T-cell (primary cell): ENCODE measurements at regions of chr6 and their contacts with region 1.

Region 1: DNA sequence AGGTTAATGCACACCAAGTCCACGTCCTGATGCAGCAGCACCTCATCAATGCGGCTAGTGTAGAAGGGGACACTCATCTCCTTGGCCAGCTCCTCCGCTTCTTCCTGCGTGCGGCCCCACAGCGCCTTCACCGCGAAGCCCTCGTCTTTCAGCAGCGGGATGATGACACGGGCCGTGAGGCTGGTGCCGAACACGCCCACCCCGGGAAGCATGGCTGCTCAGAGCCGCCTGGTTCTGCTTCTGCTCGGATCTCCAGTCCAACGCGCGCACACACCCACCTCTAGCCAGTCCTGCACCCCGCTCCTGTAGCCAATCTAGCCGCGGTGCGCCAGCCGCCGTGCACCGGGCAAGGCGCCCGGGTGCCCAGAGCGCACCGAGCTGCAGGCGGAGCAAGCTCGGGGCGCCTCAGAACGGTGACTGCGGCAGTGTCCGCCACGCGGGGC is 700 bp downstream of the GFOD1 start:
- DNase-seq: peak in 32 of 35 experiments; percentile 21 to 68 (median 39)
- ATAC-seq: peak; percentile 42 to 54 (median 48)
- H3K4me3 ChIP-seq: peak overlapping the region; percentile 61 to 81
- H3K4me3 Mint-ChIP-seq: peak overlapping the region; percentile 85 to 94 (median 88)
- H3K27ac ChIP-seq: no peak overlapping the region
- H3K27ac Mint-ChIP-seq: peak overlapping the region in 1 of 2 donors; percentile 73
- H3K4me1 ChIP-seq: peaks cover 12 to 37% of the 10 kb centered on the region in 2 experiments
- H3K4me1 Mint-ChIP-seq: peaks cover 27 to 39% (median 32%) of the 10 kb centered on the region in 3 donors
- H3K27me3 ChIP-seq: peaks cover 0 to 19% of the 10 kb centered on the region in 2 experiments
- H3K27me3 Mint-ChIP-seq: peaks cover 10 to 17% of the 10 kb centered on the region in 2 donors

Region 2: DNA sequence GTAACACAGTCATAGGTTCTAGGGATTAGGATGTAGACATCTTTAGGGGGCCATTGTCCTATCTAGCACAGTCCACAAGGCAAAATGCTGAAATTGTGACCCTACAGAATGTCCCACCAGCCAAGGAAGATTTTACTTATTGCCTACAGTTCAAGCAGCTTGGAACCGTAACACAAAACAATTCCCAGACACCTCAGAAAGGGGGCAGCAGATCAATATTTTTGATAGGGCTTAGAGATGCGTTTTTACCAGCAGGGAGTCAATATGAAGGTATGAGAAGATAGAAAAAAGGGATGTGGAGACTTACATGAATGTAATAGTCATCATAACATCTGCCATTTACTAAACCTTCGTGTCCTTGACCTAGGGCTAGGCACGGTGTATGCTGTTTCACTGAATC is 1868.2 kb before region 1 on chr6:
- CTCF ChIA-PET with region 1: no interaction called
- POLR2A ChIA-PET with region 1: no interaction called
- DNase-seq: peak in 1 of 35 experiments; percentile 5
- ATAC-seq: no peak
- H3K4me3 ChIP-seq: no peak overlapping the region
- H3K4me3 Mint-ChIP-seq: no peak overlapping the region
- H3K27ac ChIP-seq: no peak overlapping the region
- H3K27ac Mint-ChIP-seq: no peak overlapping the region
- H3K4me1 ChIP-seq: no peaks in the 10 kb centered on the region
- H3K4me1 Mint-ChIP-seq: no peaks in the 10 kb centered on the region
- H3K27me3 ChIP-seq: no peaks in the 10 kb centered on the region
- H3K27me3 Mint-ChIP-seq: peaks cover 0 to 2% of the 10 kb centered on the region in 2 donors

Region 3: GRCh38 chr6:11711003-11711983 is 1775.4 kb before region 1 on chr6:
- CTCF ChIA-PET with region 1: interaction called in 1 of 2 experiments, 10 read pairs
- POLR2A ChIA-PET with region 1: no interaction called
- DNase-seq: peak in 15 of 35 experiments; percentile 9 to 58 (median 30)
- ATAC-seq: peak; percentile 31 to 57 (median 50)
- H3K4me3 ChIP-seq: no peak overlapping the region
- H3K4me3 Mint-ChIP-seq: peak overlapping the region in 2 of 3 donors; percentile 28 to 78
- H3K27ac ChIP-seq: peak overlapping the region; percentile 73
- H3K27ac Mint-ChIP-seq: peak overlapping the region; percentile 95 to 99
- H3K4me1 ChIP-seq: peaks cover 51 to 56% of the 10 kb centered on the region in 2 experiments
- H3K4me1 Mint-ChIP-seq: peaks cover 72 to 87% (median 80%) of the 10 kb centered on the region in 3 donors
- H3K27me3 ChIP-seq: no peaks in the 10 kb centered on the region
- H3K27me3 Mint-ChIP-seq: no peaks in the 10 kb centered on the region

Region 4: DNA sequence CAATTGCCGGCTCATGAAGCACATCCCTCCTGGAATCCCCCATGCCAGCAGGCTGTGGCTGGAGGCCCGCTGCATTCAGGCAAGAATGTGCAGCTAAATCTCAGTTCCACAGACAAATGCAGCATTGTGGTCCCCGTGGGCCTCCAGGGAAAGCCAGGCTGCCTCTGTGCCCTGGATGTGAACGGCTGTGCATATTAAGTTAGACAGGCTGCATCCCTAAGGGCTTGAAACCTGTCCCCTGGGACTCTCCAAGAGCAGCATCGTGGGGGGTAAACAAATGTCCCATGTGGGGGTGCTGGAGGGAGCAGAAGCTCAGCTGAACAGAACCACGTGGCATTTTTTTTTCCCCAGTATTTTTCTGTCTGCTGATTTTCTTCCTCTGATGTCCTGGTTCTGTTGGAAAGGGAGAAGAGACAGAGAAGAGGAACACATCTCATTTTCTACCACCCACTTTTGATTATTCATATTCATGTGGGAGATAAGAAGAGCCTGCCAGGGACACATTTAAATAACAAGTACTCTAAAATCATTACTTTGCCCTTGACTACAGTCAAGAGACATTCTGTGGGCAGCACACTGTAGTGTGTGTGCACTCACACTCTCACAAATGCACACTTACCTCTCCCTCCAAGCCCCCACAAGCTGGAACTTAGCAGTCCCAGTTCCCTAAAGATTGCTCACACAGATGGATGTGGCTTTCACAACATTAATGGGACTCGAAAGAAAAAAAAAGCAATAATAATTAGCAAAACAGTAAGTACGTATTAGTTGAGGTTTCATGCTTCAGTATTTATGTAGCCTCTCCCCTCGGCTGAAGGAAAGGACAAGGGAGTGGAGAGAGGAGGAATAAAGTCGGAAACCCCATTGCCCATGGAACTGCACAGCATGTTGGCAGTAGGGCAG is 16.2 kb before region 1 on chr6:
- CTCF ChIA-PET with region 1: no interaction called
- POLR2A ChIA-PET with region 1: no interaction called
- DNase-seq: no peak
- ATAC-seq: no peak
- H3K4me3 ChIP-seq: no peak overlapping the region
- H3K4me3 Mint-ChIP-seq: no peak overlapping the region
- H3K27ac ChIP-seq: no peak overlapping the region
- H3K27ac Mint-ChIP-seq: no peak overlapping the region
- H3K4me1 ChIP-seq: peaks cover 0 to 7% of the 10 kb centered on the region in 2 experiments
- H3K4me1 Mint-ChIP-seq: peaks cover 0 to 15% (median 12%) of the 10 kb centered on the region in 3 donors
- H3K27me3 ChIP-seq: no peaks in the 10 kb centered on the region
- H3K27me3 Mint-ChIP-seq: no peaks in the 10 kb centered on the region